GM10248 (cell line): ENCODE measurements at regions of chr7 and their contacts with region 1.

Region 1: GRCh38 chr7:16564909-16565426 is 38.3 kb downstream of the LRRC72 start:
- DNase-seq: peak; percentile 48
- CTCF ChIP-seq: peak; percentile 58

Region 2: DNA sequence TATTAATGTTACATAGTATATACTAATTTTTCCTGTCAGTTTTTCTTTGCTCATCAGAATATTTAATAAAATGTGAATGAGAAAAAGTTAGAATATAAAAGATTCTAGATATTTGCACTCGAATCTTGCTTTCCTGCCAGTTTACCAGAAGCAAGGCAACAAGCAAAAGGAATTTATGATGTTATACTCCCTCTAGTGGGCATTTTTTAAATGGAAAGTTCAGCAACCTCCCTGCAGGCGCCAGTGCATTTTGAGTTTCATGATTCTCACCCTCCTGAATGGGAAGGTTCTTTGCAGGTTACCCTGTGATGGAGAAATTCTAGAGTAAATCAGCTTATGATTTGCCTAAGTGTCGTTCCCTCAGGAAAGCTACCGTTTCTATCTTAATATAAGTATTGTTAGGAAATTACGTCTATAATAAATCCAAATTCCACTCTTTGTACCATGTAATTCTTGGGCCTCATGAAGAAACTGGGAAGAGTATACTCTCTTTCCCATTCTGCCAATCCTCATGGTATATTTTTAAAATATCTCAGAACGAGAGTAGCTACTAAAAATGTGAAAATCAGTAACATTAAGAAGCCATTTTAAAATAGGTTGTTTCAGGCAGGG is 493.6 kb before region 1 on chr7:
- CTCF ChIA-PET with region 1: interaction called, 20 read pairs
- POLR2A ChIA-PET with region 1: no interaction called
- DNase-seq: peak; percentile 14
- CTCF ChIP-seq: peak; percentile 53

Region 3: DNA sequence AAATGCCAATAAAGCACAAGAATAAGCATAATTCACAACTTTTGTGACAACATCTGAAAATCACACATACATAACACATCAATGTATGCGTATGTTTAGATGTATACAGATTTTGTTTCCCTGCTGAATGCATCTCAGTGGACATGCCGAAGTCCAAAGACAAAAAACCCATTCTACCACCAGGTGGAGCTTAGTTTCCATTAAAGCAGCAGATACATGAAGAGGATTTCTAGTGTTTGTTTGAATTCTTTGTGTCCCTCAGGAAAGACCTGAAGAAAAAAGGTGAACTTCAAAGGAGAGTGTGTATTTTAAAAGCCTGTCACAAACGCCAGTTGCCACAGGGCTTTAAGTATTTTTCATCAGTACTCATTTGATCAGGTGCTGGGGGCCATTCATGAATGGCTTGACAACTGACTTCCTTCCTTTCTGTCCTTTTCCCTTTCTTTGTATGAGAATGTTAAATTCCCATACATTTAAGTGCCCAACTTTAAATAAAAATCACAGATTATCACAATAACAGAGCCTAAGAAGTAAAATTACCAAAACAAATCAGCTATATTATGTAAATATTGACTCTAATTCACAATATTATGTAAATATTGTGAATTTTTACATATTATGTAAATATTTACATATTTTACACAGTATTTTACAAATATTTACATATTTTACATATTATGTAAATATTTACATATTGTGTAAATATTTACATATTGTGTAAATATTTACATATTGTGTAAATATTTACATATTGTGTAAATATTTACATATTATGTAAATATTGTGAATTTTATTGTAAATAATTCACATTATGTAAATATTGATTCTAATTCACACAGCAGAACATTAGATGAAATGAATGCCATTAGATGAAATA is 486.7 kb before region 1 on chr7:
- CTCF ChIA-PET with region 1: interaction called, 56 read pairs
- POLR2A ChIA-PET with region 1: no interaction called
- DNase-seq: peak; percentile 16
- CTCF ChIP-seq: peak; percentile 56

Region 4: DNA sequence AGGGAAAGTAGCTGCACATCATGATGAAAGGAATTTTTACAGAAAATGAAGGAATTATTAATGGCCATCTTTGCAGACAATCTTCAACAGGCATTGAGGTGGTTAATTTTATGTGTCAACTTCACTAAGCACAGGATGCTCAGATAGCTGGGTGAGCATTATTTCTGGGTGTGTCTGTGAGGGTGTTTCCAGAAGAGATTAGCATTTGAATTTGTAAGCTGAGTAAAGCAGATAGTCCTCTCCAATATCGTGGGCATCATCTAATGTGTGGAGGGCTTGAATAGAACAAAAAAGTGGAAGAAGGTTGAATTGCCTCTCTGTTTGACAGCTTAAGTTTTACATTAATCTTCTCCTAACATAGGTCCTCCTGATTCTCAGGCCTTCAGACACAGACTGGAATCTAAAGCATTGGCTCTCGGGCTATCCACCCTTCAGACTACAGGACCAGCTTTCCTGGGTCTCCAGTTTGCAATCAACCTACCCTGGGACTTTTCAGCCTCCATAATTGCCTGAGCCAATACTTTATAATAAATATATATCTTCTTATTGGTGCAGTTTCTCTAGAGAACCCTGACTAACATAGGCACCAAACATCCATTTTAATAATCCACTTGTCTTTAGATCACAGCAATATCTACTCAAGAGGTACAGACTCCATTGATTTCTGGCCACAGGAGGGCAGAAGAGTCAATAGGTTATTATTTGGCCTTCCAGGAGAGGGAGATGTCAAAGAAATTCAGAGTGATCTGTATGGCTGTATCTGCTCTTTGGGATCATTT is 133.1 kb before region 1 on chr7:
- CTCF ChIA-PET with region 1: interaction called, 17 read pairs
- POLR2A ChIA-PET with region 1: no interaction called
- DNase-seq: peak; percentile 22
- CTCF ChIP-seq: peak; percentile 45

Region 5: GRCh38 chr7:16542401-16542800 is 22.6 kb before region 1 on chr7:
- CTCF ChIA-PET with region 1: interaction called, 94 read pairs
- POLR2A ChIA-PET with region 1: no interaction called
- DNase-seq: no peak
- CTCF ChIP-seq: no peak

Region 6: GRCh38 chr7:16554518-16555236 is 10.3 kb before region 1 on chr7:
- CTCF ChIA-PET with region 1: interaction called, 94 read pairs
- POLR2A ChIA-PET with region 1: no interaction called
- DNase-seq: no peak
- CTCF ChIP-seq: no peak

Region 7: GRCh38 chr7:16638282-16639280 is 73.6 kb after region 1 on chr7:
- CTCF ChIA-PET with region 1: no interaction called
- POLR2A ChIA-PET with region 1: no interaction called
- DNase-seq: no peak
- CTCF ChIP-seq: no peak